ENCODE measurements at regions of chr10 and their contacts with region 1.

Region 1: DNA sequence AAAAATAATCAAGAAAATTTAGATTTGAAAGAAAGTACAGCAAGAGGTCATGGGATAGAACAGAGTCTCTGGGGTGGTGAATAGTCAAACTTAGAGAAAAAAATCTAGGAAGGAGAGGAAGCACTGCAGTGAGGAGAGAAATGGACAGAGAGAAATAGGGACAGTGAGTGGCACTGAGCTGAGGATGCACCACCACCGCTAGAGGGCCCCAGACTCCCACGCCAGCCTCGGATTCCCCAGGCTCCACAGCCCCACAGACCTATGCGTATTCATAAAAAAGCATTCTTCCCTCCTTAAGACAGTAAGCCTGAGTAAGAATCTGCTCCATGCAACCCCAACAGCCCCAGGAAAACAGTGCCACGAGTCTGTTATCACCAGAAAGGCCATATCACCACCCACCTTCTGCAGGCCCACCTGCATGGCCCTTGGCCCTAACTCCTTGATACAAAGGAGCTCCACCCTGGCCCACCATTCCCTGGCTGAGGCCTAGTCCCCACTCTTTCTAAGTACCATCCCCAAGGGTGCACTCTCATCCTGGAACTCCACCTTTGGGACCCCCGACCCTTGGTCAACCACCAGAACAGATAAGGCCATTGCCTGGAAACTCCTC is 91.0 kb downstream of the ALOX5 start:
- DNase-seq: peak; percentile 75 to 81
- ATAC-seq: peak; percentile 87 to 97 (median 94)
- H3K4me3 ChIP-seq: no peak overlapping the region
- H3K27ac ChIP-seq: no peak overlapping the region
- H3K4me1 ChIP-seq: peaks cover 0 to 63% (median 15%) of the 10 kb centered on the region in 9 donors
- H3K27me3 ChIP-seq: no peaks in the 10 kb centered on the region
- CTCF ChIP-seq: peak; percentile 74 to 95 (median 91)

Region 2: DNA sequence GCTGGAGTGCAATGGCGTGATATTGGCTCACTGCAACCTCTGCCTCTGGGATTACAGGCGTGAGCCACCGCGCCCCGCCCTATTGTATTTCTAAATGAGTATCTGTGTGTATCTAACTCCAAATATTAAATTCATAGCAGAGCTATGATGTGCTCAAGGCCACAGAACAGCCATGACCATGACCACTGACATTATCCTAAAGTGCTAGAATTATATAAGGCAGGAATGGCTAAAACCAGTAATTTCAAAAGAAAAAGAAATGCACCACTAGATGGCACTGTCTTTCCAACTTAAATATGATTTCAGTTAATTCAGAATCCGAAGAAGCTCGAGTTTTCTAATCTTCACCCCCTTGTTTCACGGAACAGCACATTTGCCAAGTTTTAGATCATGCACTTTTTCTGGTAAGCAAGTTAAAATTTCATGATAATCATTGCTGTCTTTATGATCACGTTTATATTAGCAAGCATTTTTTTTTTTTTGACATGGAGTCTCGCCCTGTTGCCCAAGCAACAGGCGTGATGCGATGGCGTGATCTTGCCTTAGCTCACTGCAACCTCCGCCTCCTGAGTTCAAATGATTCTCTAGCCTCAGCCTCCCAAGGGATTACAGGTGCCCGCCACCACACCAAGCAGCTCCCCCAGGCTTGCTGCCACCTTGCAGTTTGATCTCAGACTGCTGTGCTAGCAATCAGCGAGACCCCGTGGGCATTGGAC is 214.9 kb before region 1 on chr10:
- intact Hi-C with region 1: loop called in 5 of 10 experiments (anchors 5 to 10 kb)
- DNase-seq: no peak
- ATAC-seq: peak in 7 of 8 donors; percentile 28 to 76 (median 51)
- H3K4me3 ChIP-seq: peak overlapping the region in 6 of 10 donors; percentile 5 to 36 (median 21)
- H3K27ac ChIP-seq: no peak overlapping the region
- H3K4me1 ChIP-seq: peaks cover 0 to 14% (median 0%) of the 10 kb centered on the region in 9 donors
- H3K27me3 ChIP-seq: peaks cover 0 to 10% (median 0%) of the 10 kb centered on the region in 7 donors
- CTCF ChIP-seq: peak; percentile 47 to 77 (median 70)

Region 3: DNA sequence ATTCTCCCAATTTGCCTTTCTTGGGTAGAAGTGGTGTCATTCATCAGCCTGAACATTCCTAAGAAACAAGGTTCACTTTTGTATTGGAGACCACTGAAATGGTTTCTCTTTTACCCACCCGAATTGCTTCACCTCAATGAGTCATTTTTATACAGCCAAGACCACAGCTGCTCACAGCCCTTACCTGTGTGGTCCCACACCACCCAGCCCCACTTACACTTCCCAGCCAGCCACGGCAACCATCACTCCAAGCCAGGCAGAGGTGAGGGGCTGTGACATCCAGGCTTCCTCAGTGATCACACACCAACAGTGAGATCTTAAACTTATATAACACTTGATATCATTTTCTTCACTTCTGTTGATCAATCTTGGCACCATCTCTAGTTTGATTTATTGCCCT is 170.4 kb before region 1 on chr10:
- intact Hi-C with region 1: no loop called
- DNase-seq: no peak
- ATAC-seq: no peak
- H3K4me3 ChIP-seq: no peak overlapping the region
- H3K27ac ChIP-seq: no peak overlapping the region
- H3K4me1 ChIP-seq: peaks cover 0 to 3% (median 0%) of the 10 kb centered on the region in 9 donors
- H3K27me3 ChIP-seq: peaks cover 0 to 4% (median 0%) of the 10 kb centered on the region in 7 donors
- CTCF ChIP-seq: no peak

Region 4: GRCh38 chr10:45487738-45488137 is 22.7 kb after region 1 on chr10:
- intact Hi-C with region 1: loop called in 1 of 10 experiments (anchors 2 kb)
- DNase-seq: no peak
- ATAC-seq: no peak
- H3K4me3 ChIP-seq: no peak overlapping the region
- H3K27ac ChIP-seq: no peak overlapping the region
- H3K4me1 ChIP-seq: no peaks in the 10 kb centered on the region
- H3K27me3 ChIP-seq: no peaks in the 10 kb centered on the region
- CTCF ChIP-seq: no peak

Region 5: DNA sequence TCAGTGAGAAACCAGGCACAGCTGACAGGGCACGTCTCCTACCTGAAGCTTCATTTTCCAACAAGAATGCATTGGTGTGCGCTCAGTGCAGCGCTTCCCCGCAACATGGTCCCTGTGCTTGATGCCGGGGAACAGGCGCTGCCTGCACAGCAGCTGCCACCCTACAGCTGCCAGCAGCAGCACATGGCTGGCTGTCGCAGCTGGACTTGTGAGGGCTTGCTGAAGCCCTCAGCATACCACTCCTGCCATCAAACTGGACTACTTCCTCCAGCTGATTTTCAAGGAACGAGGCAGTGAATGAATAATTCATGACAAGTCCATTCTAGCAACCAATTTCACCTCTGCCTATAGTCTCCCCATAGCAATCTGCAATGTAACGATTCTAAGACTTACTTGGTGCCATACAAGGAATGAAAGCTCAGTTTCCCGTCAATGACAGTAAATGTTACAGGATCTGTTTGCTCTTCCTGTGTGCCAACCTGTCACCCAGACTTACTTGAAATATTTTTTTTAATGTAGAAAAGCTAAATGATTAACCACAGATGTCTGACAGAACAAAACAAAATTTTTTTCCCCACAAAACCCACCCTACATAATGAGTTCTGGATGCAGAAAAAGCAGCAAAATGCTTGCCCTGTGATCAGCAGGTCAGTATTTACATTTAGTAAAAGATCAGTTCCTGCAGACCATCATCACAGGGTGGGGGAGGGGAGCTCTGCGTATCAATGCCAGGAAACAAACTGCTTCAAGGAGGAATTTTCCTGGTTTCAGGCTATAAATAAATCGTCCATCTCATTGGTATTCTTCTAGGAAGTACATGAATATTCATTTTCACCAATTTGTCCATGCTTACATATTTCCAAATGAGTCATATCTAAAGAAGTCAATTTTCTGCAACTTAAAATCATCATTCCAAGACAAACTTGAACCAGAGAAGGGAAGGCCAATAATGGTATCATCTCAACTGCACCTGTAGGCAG is 49.5 kb after region 1 on chr10:
- intact Hi-C with region 1: no loop called
- DNase-seq: no peak
- ATAC-seq: no peak
- H3K4me3 ChIP-seq: no peak overlapping the region
- H3K27ac ChIP-seq: no peak overlapping the region
- H3K4me1 ChIP-seq: peaks cover 0 to 25% (median 4%) of the 10 kb centered on the region in 9 donors
- H3K27me3 ChIP-seq: no peaks in the 10 kb centered on the region
- CTCF ChIP-seq: no peak

Region 6: DNA sequence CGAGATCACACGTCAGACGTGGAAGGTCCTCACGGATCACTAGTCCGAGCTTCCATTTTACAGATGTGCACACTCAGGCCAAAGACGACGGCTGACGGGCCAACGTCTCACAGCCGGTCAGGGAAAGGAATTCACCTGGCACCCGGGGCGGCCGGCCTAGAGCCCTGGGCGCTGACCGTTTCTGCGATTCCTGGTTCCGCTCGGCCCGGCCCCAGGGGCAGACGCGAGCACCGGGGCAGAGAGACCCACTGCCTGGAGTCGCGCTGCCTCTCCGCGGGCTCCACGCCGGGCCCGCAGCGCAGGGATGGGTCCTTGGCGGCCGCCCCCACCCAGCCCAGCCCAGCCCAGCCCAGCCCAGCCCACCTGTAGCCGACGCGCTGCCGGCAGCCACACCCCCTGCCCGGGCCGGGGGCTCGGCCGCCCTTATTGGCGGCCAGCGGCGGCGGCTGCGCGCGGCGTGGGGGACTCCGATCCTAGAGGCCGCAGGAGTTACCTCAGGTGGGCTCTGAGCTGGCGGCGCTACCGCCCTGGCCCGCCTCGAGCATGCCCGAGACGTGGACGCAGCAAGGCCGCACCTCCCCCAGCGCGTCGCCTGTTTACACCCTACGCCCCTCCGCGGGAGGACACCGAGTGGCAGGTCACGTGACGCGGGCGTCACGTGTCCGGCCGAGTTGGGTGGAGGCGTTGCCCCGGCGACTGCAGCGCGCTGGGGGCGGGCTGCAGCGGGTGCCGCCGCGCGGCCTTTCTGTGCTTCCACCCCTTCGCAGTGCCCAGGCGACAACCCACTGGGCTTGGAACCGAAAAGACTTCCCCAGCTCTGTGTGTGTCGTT is 129.4 kb after region 1 on chr10:
- intact Hi-C with region 1: loop called in 6 of 10 experiments (anchors 5 to 10 kb)
- DNase-seq: peak; percentile 91 to 94
- ATAC-seq: peak; percentile 98 to 100 (median 99)
- H3K4me3 ChIP-seq: peak overlapping the region; percentile 61 to 96 (median 82)
- H3K27ac ChIP-seq: peak overlapping the region; percentile 38 to 77 (median 67)
- H3K4me1 ChIP-seq: peaks cover 0 to 34% (median 25%) of the 10 kb centered on the region in 9 donors
- H3K27me3 ChIP-seq: peaks cover 0 to 9% (median 0%) of the 10 kb centered on the region in 7 donors
- CTCF ChIP-seq: peak in 4 of 9 donors; percentile 17 to 42 (median 32)

Region 7: GRCh38 chr10:45660876-45661411 is 195.9 kb after region 1 on chr10:
- intact Hi-C with region 1: no loop called
- DNase-seq: no peak
- ATAC-seq: no peak
- H3K4me3 ChIP-seq: no peak overlapping the region
- H3K27ac ChIP-seq: no peak overlapping the region
- H3K4me1 ChIP-seq: peaks cover 0 to 12% (median 3%) of the 10 kb centered on the region in 9 donors
- H3K27me3 ChIP-seq: no peaks in the 10 kb centered on the region
- CTCF ChIP-seq: no peak

Region 8: GRCh38 chr10:45672181-45673073 is 207.4 kb after region 1 on chr10 and contains the start of gene ZFAND4:
- intact Hi-C with region 1: loop called in 8 of 10 experiments (anchors 2 to 10 kb)
- DNase-seq: peak; percentile 98
- ATAC-seq: peak; percentile 98 to 100 (median 99)
- H3K4me3 ChIP-seq: peak within 1 kb of the TSS; percentile 61 to 98 (median 81)
- H3K27ac ChIP-seq: peak within 1 kb of the TSS; percentile 59 to 96 (median 91)
- H3K4me1 ChIP-seq: peaks cover 0 to 24% (median 6%) of the 10 kb centered on the region in 9 donors
- H3K27me3 ChIP-seq: no peaks in the 10 kb centered on the region
- CTCF ChIP-seq: peak; percentile 54 to 92 (median 73)
- total RNA-seq, gene ZFAND4: 9.5 to 12.5 (median 10.5) TPM

Measured in heart right ventricle (tissue), 16 donors.